Heart right ventricle (tissue), 16 donors: ENCODE measurements at regions of chr11 and their contacts with region 1.

Region 1: GRCh38 chr11:55324500-55324899 is 18.5 kb upstream of the OR4A16 start:
- DNase-seq: no peak
- ATAC-seq: no peak
- H3K4me3 ChIP-seq: no peak overlapping the region
- H3K27ac ChIP-seq: no peak overlapping the region
- H3K4me1 ChIP-seq: no peaks in the 10 kb centered on the region
- H3K27me3 ChIP-seq: no peaks in the 10 kb centered on the region
- CTCF ChIP-seq: no peak

Region 2: DNA sequence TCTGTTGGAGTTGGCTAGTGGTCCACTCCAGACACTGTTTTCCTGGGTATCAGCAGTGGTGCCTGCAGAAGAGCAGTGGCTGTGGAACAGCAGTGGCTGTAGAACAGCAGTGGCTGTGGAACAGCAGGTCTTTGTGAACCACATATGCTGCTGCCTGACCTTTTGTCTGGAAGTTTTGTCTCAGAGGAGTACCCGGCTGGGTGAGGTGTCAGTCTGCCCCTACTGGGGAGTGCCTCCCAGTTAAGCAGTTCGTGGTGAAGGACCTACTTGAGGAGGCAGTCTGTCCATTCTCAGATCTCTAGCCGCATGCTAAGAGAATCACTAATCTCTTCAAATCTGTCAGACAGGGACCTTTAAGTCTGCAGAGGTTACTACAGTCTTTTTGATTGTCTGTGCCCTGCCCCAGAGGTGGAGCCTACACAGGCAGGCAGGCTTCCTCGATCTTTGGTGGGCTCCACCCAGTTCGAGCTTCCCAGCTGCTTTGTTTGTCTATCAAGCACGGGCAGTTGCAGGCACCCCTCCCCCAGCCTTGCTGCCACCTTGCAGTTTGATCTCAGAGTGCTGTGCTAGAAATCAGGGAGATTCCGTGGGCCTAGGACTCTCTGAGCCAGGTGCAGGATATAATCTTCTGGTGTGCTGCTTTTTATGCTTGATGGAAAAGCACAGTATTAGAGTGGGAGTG is 151.6 kb before region 1 on chr11:
- intact Hi-C with region 1: no loop called
- DNase-seq: no peak
- ATAC-seq: no peak
- H3K4me3 ChIP-seq: no peak overlapping the region
- H3K27ac ChIP-seq: no peak overlapping the region
- H3K4me1 ChIP-seq: no peaks in the 10 kb centered on the region
- H3K27me3 ChIP-seq: no peaks in the 10 kb centered on the region
- CTCF ChIP-seq: no peak

Region 3: GRCh38 chr11:55367674-55368073 is 43.2 kb after region 1 on chr11 and contains the start of gene OR4A15:
- intact Hi-C with region 1: loop called in 1 of 10 experiments (anchors 10 kb)
- DNase-seq: no peak
- ATAC-seq: no peak
- H3K4me3 ChIP-seq: no peak within 1 kb of the TSS
- H3K27ac ChIP-seq: no peak within 1 kb of the TSS
- H3K4me1 ChIP-seq: no peaks in the 10 kb centered on the region
- H3K27me3 ChIP-seq: no peaks in the 10 kb centered on the region
- CTCF ChIP-seq: no peak
- total RNA-seq, gene OR4A15: not detected

Region 4: DNA sequence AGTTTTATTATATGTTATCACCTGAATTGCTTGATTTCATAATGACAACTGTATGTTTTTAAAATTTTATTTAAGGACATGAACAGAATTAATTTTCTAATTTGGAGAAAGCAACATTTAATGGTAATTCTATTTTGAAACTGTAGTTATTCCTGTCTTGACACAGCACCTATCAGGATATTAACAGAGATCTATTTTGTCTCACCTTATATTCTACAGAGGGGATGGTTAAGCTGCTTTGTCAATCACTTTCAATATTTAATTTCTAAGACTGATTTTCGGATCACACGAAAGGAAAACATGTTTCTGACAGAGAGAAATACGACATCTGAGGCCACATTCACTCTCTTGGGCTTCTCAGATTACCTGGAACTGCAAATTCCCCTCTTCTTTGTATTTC is 514.0 kb after region 1 on chr11 and contains the start of gene OR5D16:
- intact Hi-C with region 1: no loop called
- DNase-seq: no peak
- ATAC-seq: no peak
- H3K4me3 ChIP-seq: no peak within 1 kb of the TSS
- H3K27ac ChIP-seq: no peak within 1 kb of the TSS
- H3K4me1 ChIP-seq: no peaks in the 10 kb centered on the region
- H3K27me3 ChIP-seq: no peaks in the 10 kb centered on the region
- CTCF ChIP-seq: no peak
- total RNA-seq, gene OR5D16: not detected